ENCODE measurements at regions of chr11 and their contacts with region 1.

Region 1: DNA sequence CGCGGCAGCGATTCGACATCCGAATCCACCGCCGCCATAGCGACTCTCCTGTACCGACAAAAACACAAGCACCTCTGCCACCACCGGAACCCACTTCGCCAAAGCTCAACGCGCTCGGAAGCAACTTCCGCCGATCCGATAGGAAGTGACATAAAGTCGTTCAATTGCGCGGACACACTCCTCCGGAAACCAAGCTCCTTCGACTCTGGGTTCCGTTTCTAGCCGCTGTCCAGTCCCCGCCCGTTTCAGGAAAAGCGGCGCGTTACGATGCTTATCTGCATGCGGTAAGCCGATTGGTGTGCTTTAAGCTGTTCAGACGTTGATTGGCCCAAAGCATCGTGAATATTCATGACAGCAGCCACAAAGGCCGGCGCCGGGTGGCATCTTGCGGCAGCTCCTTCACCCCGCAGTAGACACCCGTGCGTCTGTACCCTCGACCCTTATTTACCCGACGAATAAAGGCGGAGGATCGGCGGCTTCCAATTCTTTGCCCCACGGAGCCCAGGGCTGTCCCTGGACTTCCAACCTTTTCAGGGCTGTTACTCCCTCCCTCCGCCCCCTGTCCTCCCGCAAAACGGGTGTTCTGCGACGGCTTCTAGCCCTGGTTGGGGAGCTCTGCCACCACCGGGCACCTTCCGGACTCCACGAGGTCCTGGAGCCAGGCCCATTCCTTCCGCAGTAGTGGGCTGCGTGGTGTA is at the start of gene TUT1:
- DNase-seq: peak; percentile 99
- H3K4me3 Mint-ChIP-seq: peak within 1 kb of the TSS; percentile 100
- H3K27ac Mint-ChIP-seq: peak within 1 kb of the TSS; percentile 97
- H3K4me1 Mint-ChIP-seq: peaks cover 52% of the 10 kb centered on the region
- H3K27me3 Mint-ChIP-seq: no peaks in the 10 kb centered on the region
- total RNA-seq, gene TUT1: 32.7 to 34.2 TPM

Region 2: DNA sequence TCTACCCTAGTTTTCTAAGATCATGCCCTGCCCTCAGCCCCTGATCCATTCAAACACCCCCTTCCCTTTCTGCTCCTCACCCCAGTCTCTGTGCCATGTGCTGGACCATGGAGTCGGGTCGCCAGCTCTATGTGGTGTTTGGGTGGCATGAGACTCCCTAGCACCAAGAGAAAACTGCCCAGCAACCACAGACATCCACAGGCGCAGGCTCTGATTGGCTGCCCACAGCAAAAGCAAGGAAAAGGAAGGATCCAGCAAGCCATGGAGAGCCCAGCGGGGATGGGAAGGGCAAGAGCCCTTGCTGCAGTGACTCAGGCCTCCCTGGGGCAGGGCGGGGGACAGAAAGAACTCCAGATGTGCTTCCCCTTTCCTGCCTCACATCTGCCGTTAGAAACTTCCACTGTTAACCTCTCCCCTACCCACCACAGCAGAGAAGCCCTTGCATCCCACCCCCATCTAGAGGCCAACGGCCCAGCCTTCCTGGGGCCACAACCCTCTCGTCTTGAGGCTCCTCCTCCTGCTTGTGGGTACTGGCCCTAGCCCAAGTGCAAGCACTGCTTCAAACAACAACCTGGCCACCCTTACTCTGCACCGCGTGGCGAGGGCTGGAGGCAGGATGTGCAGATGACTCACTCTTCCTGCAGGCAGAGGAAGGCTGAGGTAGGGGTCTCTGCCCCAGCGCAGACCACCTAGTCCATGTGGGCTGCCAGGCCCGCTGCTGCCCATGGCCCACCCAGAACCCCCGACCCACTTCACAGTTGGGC is 35.3 kb before region 1 on chr11:
- CTCF ChIA-PET with region 1: interaction called, 9 read pairs
- POLR2A ChIA-PET with region 1: interaction called, 18 read pairs
- intact Hi-C with region 1: loop called (anchors 1 kb)
- DNase-seq: peak; percentile 94
- H3K4me3 Mint-ChIP-seq: peak overlapping the region; percentile 59
- H3K27ac Mint-ChIP-seq: peak overlapping the region; percentile 96
- H3K4me1 Mint-ChIP-seq: peaks cover 96% of the 10 kb centered on the region
- H3K27me3 Mint-ChIP-seq: peaks cover 2% of the 10 kb centered on the region

Region 3: GRCh38 chr11:62621567-62622470 is 30.2 kb after region 1 on chr11 and contains the start of gene B3GAT3:
- CTCF ChIA-PET with region 1: interaction called, 31 read pairs
- POLR2A ChIA-PET with region 1: interaction called, 30 read pairs
- intact Hi-C with region 1: loop called (anchors 2 kb)
- DNase-seq: peak; percentile 98
- H3K4me3 Mint-ChIP-seq: peak within 1 kb of the TSS; percentile 97
- H3K27ac Mint-ChIP-seq: peak within 1 kb of the TSS; percentile 96
- H3K4me1 Mint-ChIP-seq: peaks cover 22% of the 10 kb centered on the region
- H3K27me3 Mint-ChIP-seq: no peaks in the 10 kb centered on the region
- total RNA-seq, gene B3GAT3: 67.0 to 70.4 TPM

Region 4: GRCh38 chr11:62665075-62665598 is 73.5 kb after region 1 on chr11 and contains the starts of genes C11orf98 and CSKMT:
- CTCF ChIA-PET with region 1: interaction called, 19 read pairs
- POLR2A ChIA-PET with region 1: interaction called, 62 read pairs
- intact Hi-C with region 1: loop called (anchors 1 kb)
- DNase-seq: peak; percentile 97
- H3K4me3 Mint-ChIP-seq: peak within 1 kb of the TSS; percentile 98
- H3K27ac Mint-ChIP-seq: peak within 1 kb of the TSS; percentile 97
- H3K4me1 Mint-ChIP-seq: peaks cover 40% of the 10 kb centered on the region
- H3K27me3 Mint-ChIP-seq: no peaks in the 10 kb centered on the region
- total RNA-seq, gene C11orf98: 107 to 110 TPM
- total RNA-seq, gene CSKMT: 27.7 to 33.9 TPM

Region 5: GRCh38 chr11:62694455-62695167 is 103.0 kb after region 1 on chr11:
- CTCF ChIA-PET with region 1: interaction called, 6 read pairs
- POLR2A ChIA-PET with region 1: interaction called, 4 read pairs
- intact Hi-C with region 1: loop called (anchors 1 kb)
- DNase-seq: peak; percentile 81
- H3K4me3 Mint-ChIP-seq: no peak overlapping the region
- H3K27ac Mint-ChIP-seq: no peak overlapping the region
- H3K4me1 Mint-ChIP-seq: peaks cover 5% of the 10 kb centered on the region
- H3K27me3 Mint-ChIP-seq: no peaks in the 10 kb centered on the region

Region 6: DNA sequence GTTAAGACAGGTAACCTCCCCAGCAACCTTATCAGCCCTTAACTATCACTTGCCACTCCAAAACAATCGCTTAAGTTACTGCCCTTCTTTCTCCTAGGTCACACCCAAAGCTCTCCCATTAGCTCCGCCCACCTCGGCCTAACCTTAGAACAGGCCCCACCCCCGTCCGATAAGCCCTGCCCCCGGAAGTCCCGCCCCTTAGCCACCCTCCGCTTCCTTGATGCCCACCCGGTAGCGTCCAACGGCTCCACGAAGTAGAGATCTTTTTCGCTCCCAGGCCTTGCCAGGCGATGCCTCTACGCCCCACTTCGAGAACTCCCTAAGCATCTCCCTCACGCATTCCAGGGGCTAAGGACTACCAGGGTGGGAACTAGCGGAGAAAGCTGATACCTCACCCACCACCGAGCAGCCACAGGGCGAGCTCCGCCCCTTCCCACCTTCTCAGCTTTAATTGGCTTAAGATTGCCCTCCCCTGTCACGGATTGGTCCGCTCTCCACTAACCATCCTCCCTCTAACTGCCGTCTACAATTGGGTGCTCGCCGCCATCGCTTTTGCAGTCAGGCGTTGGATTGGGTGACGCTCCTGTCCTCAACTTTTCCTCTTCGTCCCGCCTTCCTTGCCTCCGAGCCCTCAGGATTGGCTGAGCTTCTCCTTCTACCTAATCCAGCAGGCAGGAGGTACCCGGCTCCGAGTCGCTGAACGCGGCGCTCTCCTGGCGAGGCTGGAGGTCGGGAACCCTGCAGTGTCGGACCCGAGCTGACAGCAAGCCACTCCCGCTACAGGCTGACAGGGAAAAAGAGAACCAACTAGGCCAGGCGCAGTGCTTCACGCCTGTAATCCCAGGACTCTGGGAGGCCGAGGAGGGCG is 162.4 kb after region 1 on chr11 and contains the start of gene ZBTB3:
- CTCF ChIA-PET with region 1: interaction called, 12 read pairs
- POLR2A ChIA-PET with region 1: interaction called, 5 read pairs
- intact Hi-C with region 1: no loop called
- DNase-seq: peak; percentile 98
- H3K4me3 Mint-ChIP-seq: peak within 1 kb of the TSS; percentile 99
- H3K27ac Mint-ChIP-seq: peak within 1 kb of the TSS; percentile 99
- H3K4me1 Mint-ChIP-seq: peaks cover 23% of the 10 kb centered on the region
- H3K27me3 Mint-ChIP-seq: no peaks in the 10 kb centered on the region
- total RNA-seq, gene ZBTB3: 8.4 to 9.7 TPM

Region 7: GRCh38 chr11:62855571-62856332 is 264.2 kb after region 1 on chr11:
- CTCF ChIA-PET with region 1: interaction called, 3 read pairs
- POLR2A ChIA-PET with region 1: interaction called, 22 read pairs
- intact Hi-C with region 1: no loop called
- DNase-seq: peak; percentile 99
- H3K4me3 Mint-ChIP-seq: peak overlapping the region; percentile 95
- H3K27ac Mint-ChIP-seq: peak overlapping the region; percentile 94
- H3K4me1 Mint-ChIP-seq: peaks cover 57% of the 10 kb centered on the region
- H3K27me3 Mint-ChIP-seq: peaks cover 3% of the 10 kb centered on the region

Measured in activated CD4-positive, alpha-beta memory T cell treated with anti-CD3 and anti-CD28 coated beads for 36 hours (primary cell).